HCT116 (cell line): ENCODE measurements at regions of chr15 and their contacts with region 1.

Region 1: GRCh38 chr15:50340416-50340815 is 14.6 kb downstream of the GABPB1 start:
- DNase-seq: no peak
- ATAC-seq: no peak
- H3K4me3 ChIP-seq: no peak overlapping the region
- H3K27ac ChIP-seq: no peak overlapping the region
- H3K4me1 ChIP-seq: no peaks in the 10 kb centered on the region
- H3K27me3 ChIP-seq: no peaks in the 10 kb centered on the region
- CTCF ChIP-seq: no peak
- POLR2A ChIP-seq: no peak
- RAD21 ChIP-seq: no peak

Region 2: GRCh38 chr15:49901996-49902684 is 438.3 kb before region 1 on chr15:
- CTCF ChIA-PET with region 1: no interaction called
- POLR2A ChIA-PET with region 1: no interaction called
- RAD21 ChIA-PET with region 1: no interaction called
- intact Hi-C with region 1: no loop called
- DNase-seq: no peak
- ATAC-seq: no peak
- H3K4me3 ChIP-seq: no peak overlapping the region
- H3K27ac ChIP-seq: no peak overlapping the region
- H3K4me1 ChIP-seq: no peaks in the 10 kb centered on the region
- H3K27me3 ChIP-seq: no peaks in the 10 kb centered on the region
- CTCF ChIP-seq: peak in 2 of 3 experiments; percentile 8 to 25; a peak in 1 of 6 replicates
- POLR2A ChIP-seq: no peak
- RAD21 ChIP-seq: peak; percentile 21; the same call in 1 of the 2 replicates

Region 3: GRCh38 chr15:50280271-50280670 is 60.1 kb before region 1 on chr15:
- CTCF ChIA-PET with region 1: no interaction called
- POLR2A ChIA-PET with region 1: no interaction called
- RAD21 ChIA-PET with region 1: no interaction called
- intact Hi-C with region 1: loop called (anchors 10 kb)
- DNase-seq: no peak
- ATAC-seq: no peak
- H3K4me3 ChIP-seq: no peak overlapping the region
- H3K27ac ChIP-seq: no peak overlapping the region
- H3K4me1 ChIP-seq: no peaks in the 10 kb centered on the region
- H3K27me3 ChIP-seq: no peaks in the 10 kb centered on the region
- CTCF ChIP-seq: no peak
- POLR2A ChIP-seq: no peak
- RAD21 ChIP-seq: no peak